Activated naive CD4-positive, alpha-beta T cell treated with anti-CD3 and anti-CD28 coated beads for 36 hours (primary cell): ENCODE measurements at regions of chr21 and their contacts with region 1.

Region 1: GRCh38 chr21:32597205-32597604 is 11.9 kb upstream of the TCP10L start:
- DNase-seq: no peak
- H3K4me3 Mint-ChIP-seq: no peak overlapping the region
- H3K27ac Mint-ChIP-seq: no peak overlapping the region
- H3K4me1 Mint-ChIP-seq: no peaks in the 10 kb centered on the region
- H3K27me3 Mint-ChIP-seq: no peaks in the 10 kb centered on the region

Region 2: DNA sequence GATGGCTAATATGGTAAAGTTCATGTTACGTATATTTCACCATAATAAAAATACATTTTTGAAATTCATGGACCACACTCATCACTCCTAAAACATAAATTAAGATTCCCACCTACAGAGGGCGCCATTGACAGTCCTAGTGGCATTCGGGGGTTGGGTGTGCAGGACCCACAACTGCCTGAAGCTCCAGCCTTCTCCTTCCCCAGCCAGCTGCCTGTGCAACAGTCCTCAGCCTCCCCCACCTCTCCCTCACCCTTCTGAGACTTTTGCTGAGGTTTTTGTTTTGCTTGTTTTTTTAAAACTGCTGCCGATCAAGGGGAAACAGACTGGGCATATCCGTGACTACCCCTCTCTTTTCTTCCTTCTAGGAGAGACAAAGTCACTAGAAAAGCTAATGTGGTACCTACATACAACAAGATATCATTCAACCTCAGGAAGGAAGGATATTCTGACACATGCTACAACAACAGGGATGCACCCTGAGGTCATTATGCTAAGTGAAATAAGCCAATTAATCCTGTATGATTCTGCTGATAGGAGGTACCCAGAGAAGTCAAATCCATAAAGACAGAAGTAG is 193.9 kb before region 1 on chr21:
- CTCF ChIA-PET with region 1: interaction called, 62 read pairs
- intact Hi-C with region 1: loop called (anchors 1 kb)
- DNase-seq: peak; percentile 68
- H3K4me3 Mint-ChIP-seq: no peak overlapping the region
- H3K27ac Mint-ChIP-seq: no peak overlapping the region
- H3K4me1 Mint-ChIP-seq: no peaks in the 10 kb centered on the region
- H3K27me3 Mint-ChIP-seq: no peaks in the 10 kb centered on the region

Region 3: DNA sequence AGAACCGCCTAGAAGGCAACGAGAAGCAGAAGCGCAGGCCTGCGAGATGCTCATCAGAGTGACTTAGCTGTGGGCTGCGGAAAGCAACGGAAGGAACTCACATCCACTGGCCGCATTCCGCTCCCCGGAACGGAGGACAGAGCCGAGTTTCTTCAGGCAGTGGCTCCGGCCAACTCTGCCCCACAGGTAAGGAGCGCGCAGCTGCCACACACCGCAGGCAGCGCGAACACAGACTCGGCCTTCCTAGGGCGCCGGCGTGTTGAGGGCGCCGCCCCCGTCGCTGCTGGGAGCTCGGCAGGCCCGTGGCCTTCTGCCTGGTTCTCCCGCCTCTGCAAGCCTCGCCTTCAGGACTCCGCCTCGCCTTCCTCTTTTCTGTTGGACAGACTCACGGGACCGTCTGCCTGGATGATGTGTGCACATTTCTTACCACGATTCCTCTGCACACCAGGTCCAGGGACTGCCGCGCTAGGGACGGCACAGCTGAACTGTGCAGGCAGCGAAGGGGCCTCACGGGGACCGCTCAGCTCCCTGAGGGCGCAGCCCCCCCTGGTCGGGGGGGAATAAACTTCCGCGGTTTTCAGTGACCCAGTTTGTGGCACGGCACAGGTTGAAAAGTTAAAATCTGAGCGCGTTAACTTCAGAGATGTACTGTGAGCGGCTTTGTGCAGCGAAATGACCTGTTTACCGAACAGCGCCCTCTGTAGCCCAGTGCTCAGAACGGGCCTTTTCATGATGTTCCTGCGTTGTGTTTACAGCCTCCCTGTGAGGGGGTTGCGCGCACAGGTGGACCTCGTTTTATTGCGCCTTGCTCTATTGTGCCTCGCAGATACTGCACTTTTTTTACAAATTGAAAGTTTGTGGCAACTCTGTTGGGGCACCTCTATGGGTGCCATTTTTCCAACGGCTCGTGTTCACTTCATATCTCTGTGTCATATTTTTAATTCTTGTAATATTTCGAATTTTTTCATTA is 27.7 kb before region 1 on chr21:
- CTCF ChIA-PET with region 1: interaction called, 4 read pairs
- intact Hi-C with region 1: loop called (anchors 1 kb)
- DNase-seq: peak; percentile 88
- H3K4me3 Mint-ChIP-seq: peak overlapping the region; percentile 70
- H3K27ac Mint-ChIP-seq: no peak overlapping the region
- H3K4me1 Mint-ChIP-seq: peaks cover 12% of the 10 kb centered on the region
- H3K27me3 Mint-ChIP-seq: no peaks in the 10 kb centered on the region

Region 4: DNA sequence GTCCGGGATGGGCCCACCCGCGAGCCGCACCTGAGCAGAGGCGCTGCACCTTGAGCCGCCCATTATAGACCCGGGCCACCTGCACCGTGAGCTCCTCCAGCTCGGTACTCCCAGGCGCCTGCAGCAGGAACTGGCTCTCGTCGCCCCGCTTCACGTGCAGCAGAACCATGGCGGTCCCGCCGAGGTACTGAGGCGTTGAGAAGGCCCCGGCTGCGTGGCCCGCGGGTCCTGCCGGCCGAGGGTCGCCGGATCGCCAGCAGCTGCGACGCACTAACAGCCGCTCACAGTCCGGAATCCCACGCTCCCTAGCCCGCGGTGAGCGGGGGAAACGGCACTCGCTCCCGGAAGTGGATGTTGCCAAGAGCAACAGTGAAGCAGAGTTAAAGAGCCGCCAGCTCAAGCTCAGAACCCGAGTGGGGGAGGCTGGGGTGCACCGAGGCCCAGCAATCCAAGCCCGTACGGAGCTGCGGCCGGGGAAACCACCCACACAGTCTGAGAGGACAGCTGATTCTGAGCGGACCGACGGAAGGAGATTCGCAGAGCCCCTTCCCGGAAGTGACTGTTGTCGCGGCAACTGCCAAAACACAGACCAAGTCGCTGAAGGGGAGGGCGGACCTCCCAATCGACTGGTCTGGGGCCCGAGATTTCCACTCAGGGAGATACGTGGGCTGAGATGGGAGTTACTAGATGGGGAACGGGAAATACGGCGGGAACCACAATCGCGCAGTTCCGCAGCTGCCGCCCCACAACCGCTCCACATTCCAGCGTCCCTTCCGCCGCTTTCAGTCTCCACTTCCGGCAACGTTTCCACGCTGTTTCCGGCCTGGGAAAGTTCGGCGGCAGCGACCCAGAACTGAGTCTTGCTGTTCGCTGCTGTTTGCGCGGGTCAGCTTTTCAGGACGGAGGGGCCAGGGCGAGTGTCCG is 15.1 kb after region 1 on chr21 and contains the start of gene CFAP298:
- CTCF ChIA-PET with region 1: interaction called, 17 read pairs
- intact Hi-C with region 1: no loop called
- DNase-seq: peak; percentile 88
- H3K4me3 Mint-ChIP-seq: peak within 1 kb of the TSS; percentile 98
- H3K27ac Mint-ChIP-seq: peak within 1 kb of the TSS; percentile 83
- H3K4me1 Mint-ChIP-seq: peaks cover 13% of the 10 kb centered on the region
- H3K27me3 Mint-ChIP-seq: no peaks in the 10 kb centered on the region
- total RNA-seq, gene CFAP298: 33.3 to 35.6 TPM